Activated CD8-positive, alpha-beta T cell treated with anti-CD3 and anti-CD28 coated beads, Interleukin-2, amount 10 ng/mL, durations not matched to agents 7 days and 5 days (primary cell): ENCODE measurements at regions of chr12 and their contacts with region 1.

Region 1: DNA sequence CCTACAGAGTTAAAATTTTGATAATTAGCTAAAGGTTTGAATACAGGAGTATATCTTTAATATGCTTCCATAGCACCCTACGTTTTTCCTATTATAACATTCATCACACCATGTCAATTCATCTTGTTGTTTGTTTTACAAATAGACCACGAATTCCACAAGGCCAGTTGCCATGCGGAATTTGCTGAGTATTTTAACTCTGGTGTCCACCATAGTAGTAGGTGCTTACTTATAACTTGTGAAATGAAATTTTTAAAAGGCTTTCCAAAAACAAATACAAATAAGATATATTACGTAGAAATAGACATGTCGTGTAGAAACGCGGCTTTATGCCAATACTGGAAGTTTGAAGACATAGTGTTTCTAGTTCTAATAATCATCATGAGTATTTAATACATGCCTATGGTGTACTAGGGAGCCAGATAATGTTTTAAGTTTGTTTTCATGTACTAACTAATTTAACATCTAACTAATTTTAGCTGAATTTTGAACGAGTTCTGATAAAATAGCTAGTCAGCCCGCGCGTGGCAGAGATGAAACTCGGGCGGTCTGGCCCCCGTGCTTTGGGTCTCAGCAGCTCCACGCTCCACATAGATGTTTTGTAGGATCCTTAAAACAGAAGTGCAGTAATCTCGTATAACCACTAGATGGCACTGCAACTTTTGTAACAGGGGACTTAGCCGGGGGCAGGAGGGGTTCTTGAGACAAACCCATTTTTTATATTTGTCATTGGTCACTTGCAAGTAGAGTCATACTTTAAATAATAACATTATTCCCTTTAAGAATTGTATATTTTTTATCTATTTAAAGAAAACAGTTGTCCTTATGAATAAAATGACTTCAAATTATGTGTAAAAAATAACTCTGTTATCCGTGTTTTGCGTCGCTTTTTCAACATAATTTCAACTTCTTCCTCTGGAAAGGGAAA is 10.2 kb downstream of the CD69 start:
- DNase-seq: peak; percentile 75
- ATAC-seq: peak; percentile 57
- H3K4me3 Mint-ChIP-seq: peak overlapping the region; percentile 51
- H3K27ac Mint-ChIP-seq: peak overlapping the region; percentile 72
- H3K4me1 Mint-ChIP-seq: peaks cover 56% of the 10 kb centered on the region
- H3K27me3 Mint-ChIP-seq: no peaks in the 10 kb centered on the region

Region 2: GRCh38 chr12:9634177-9634803 is 116.2 kb before region 1 on chr12:
- CTCF ChIA-PET with region 1: interaction called, 32 read pairs
- POLR2A ChIA-PET with region 1: no interaction called
- DNase-seq: peak; percentile 91
- ATAC-seq: peak; percentile 88
- H3K4me3 Mint-ChIP-seq: no peak overlapping the region
- H3K27ac Mint-ChIP-seq: peak overlapping the region; percentile 62
- H3K4me1 Mint-ChIP-seq: peaks cover 62% of the 10 kb centered on the region
- H3K27me3 Mint-ChIP-seq: no peaks in the 10 kb centered on the region

Region 3: DNA sequence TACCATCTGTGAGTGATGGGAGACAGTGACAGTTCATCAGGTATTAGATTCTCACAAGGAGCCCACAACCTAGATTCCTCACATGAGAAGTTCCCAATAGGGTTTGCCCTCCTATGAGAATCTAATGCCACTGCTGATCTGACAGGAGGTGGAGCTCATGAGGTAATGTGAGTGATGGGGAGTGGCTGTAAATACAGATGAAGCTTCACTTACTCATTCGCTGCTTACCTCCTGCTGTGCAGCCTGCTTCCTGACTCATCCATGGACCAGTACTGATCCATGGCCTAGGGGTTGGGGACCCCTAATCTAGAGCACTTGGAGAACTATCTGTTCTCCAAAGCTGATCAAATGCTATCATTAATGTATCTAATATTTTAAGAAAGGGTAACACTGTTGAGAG is 63.3 kb before region 1 on chr12:
- CTCF ChIA-PET with region 1: no interaction called
- POLR2A ChIA-PET with region 1: no interaction called
- DNase-seq: no peak
- ATAC-seq: no peak
- H3K4me3 Mint-ChIP-seq: no peak overlapping the region
- H3K27ac Mint-ChIP-seq: peak overlapping the region; percentile 46
- H3K4me1 Mint-ChIP-seq: peaks cover 75% of the 10 kb centered on the region
- H3K27me3 Mint-ChIP-seq: no peaks in the 10 kb centered on the region

Region 4: GRCh38 chr12:9773216-9773877 is 22.8 kb after region 1 on chr12:
- CTCF ChIA-PET with region 1: interaction called, 17 read pairs
- POLR2A ChIA-PET with region 1: interaction called, 15 read pairs
- DNase-seq: no peak
- ATAC-seq: peak; percentile 77
- H3K4me3 Mint-ChIP-seq: peak overlapping the region; percentile 65
- H3K27ac Mint-ChIP-seq: peak overlapping the region; percentile 69
- H3K4me1 Mint-ChIP-seq: peaks cover 87% of the 10 kb centered on the region
- H3K27me3 Mint-ChIP-seq: no peaks in the 10 kb centered on the region

Region 5: GRCh38 chr12:9869307-9870161 is 119.0 kb after region 1 on chr12 and contains the start of gene CLEC2B:
- CTCF ChIA-PET with region 1: interaction called, 38 read pairs
- POLR2A ChIA-PET with region 1: interaction called, 251 read pairs
- DNase-seq: peak; percentile 58
- ATAC-seq: peak; percentile 55
- H3K4me3 Mint-ChIP-seq: peak within 1 kb of the TSS; percentile 79
- H3K27ac Mint-ChIP-seq: peak within 1 kb of the TSS; percentile 91
- H3K4me1 Mint-ChIP-seq: peaks cover 22% of the 10 kb centered on the region
- H3K27me3 Mint-ChIP-seq: no peaks in the 10 kb centered on the region
- total RNA-seq, gene CLEC2B: 55.2 to 58.8 TPM

Region 6: GRCh38 chr12:9925708-9926393 is 175.3 kb after region 1 on chr12:
- CTCF ChIA-PET with region 1: interaction called, 19 read pairs
- POLR2A ChIA-PET with region 1: no interaction called
- DNase-seq: peak; percentile 33
- ATAC-seq: peak; percentile 69
- H3K4me3 Mint-ChIP-seq: peak overlapping the region; percentile 60
- H3K27ac Mint-ChIP-seq: peak overlapping the region; percentile 77
- H3K4me1 Mint-ChIP-seq: peaks cover 37% of the 10 kb centered on the region
- H3K27me3 Mint-ChIP-seq: peaks cover 7% of the 10 kb centered on the region

Region 7: GRCh38 chr12:10012630-10013330 is 262.2 kb after region 1 on chr12:
- CTCF ChIA-PET with region 1: interaction called, 19 read pairs
- POLR2A ChIA-PET with region 1: no interaction called
- DNase-seq: no peak
- ATAC-seq: no peak
- H3K4me3 Mint-ChIP-seq: no peak overlapping the region
- H3K27ac Mint-ChIP-seq: no peak overlapping the region
- H3K4me1 Mint-ChIP-seq: no peaks in the 10 kb centered on the region
- H3K27me3 Mint-ChIP-seq: peaks cover 36% of the 10 kb centered on the region